SK-N-SH (cell line): ENCODE measurements at regions of chr1 and their contacts with region 1.

Region 1: DNA sequence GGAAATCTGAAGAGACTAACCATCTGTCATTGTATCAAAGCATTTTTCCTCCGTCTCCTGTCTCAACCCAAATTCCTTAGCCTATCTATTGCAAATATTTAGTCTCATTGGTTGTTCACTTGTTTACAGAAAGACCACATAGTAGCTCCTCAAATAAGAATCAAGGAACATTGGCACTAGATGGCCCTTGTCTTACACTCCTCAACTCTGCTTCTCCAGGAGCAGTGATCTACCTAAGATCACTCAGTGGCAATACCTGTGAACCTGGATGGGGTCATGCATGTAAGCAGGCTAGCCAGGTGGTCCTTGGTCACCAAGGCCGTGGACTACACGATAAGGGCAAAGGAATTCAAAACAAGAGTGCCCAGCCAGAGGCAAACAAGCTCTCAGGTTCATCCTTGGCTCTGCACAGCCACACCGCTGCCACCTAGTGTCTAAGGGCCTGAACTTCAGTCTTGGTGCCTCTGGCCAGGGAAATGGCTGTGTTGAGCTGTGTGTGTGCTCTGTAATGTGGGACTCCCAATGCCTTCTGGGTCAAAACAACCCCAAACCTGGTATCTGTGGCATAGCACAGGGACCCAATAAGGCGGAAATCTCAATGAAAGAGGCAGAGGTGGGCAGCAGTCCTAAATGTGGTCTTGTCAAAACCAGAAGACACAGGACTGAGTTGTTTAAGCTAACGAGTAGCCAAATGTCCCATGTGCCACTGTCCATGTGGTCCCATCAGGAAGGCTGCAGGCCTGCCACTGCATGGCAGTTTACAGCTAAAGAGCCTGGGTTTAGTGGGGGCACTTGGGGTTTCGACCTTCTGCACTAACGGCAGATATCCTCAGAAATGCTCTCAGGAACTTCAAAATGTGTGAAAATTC is 54.5 kb downstream of the GPR161 start:
- DNase-seq: peak; percentile 75
- H3K4me3 ChIP-seq: no peak overlapping the region; a peak in 1 of 4 replicates
- H3K27ac ChIP-seq: peak overlapping the region in 1 of 2 experiments; percentile 24; a peak in 3 of 4 replicates
- H3K4me1 ChIP-seq: peaks cover 7 to 9% of the 10 kb centered on the region in 2 experiments; a peak in 3 of 4 replicates
- H3K27me3 ChIP-seq: no peaks in the 10 kb centered on the region
- CTCF ChIP-seq: peak; percentile 83
- EP300 ChIP-seq: no peak
- RAD21 ChIP-seq: peak; percentile 86

Region 2: DNA sequence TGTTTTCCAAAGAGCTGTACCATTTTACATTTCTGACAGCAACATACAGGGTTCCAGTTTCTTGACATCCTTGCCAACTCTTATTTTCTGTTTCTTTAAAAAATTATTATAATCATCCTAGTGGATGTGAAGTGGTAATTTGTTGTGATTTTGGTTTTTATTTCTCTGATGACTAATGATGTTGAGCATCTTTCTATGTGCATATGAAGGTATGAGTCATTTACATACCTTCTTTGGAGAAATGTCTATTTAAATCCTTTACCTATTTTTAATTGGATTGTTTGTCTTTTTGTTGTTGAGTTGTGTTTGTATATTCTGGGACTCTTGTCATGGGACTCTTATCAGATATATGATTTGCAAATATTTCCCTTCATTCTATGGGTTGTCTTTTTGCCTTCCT is 124.5 kb before region 1 on chr1:
- CTCF ChIA-PET with region 1: no interaction called
- POLR2A ChIA-PET with region 1: no interaction called
- DNase-seq: no peak
- H3K4me3 ChIP-seq: no peak overlapping the region
- H3K27ac ChIP-seq: no peak overlapping the region
- H3K4me1 ChIP-seq: no peaks in the 10 kb centered on the region
- H3K27me3 ChIP-seq: no peaks in the 10 kb centered on the region
- CTCF ChIP-seq: no peak
- EP300 ChIP-seq: no peak
- RAD21 ChIP-seq: no peak

Region 3: DNA sequence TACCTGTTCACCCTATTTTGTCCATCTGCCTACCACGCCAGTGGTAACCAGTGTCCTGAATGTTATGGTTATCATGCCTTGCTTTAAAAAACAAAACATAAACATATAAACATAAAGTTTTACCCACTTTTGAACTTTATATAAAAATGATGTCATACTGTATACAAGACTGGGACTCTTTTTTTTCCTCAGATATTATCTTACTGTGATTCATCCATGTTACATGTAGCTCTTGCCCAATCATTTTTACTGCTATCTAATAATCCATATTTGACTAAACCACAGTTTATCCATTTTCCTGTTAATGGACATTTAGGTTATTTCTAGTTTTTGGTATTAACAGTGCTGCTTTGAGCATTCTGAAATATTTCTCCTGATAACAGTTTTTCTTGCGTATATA is 24.3 kb before region 1 on chr1:
- CTCF ChIA-PET with region 1: interaction called, 13 read pairs
- POLR2A ChIA-PET with region 1: no interaction called
- DNase-seq: no peak
- H3K4me3 ChIP-seq: no peak overlapping the region
- H3K27ac ChIP-seq: no peak overlapping the region
- H3K4me1 ChIP-seq: no peaks in the 10 kb centered on the region
- H3K27me3 ChIP-seq: no peaks in the 10 kb centered on the region
- CTCF ChIP-seq: no peak
- EP300 ChIP-seq: no peak
- RAD21 ChIP-seq: no peak

Region 4: DNA sequence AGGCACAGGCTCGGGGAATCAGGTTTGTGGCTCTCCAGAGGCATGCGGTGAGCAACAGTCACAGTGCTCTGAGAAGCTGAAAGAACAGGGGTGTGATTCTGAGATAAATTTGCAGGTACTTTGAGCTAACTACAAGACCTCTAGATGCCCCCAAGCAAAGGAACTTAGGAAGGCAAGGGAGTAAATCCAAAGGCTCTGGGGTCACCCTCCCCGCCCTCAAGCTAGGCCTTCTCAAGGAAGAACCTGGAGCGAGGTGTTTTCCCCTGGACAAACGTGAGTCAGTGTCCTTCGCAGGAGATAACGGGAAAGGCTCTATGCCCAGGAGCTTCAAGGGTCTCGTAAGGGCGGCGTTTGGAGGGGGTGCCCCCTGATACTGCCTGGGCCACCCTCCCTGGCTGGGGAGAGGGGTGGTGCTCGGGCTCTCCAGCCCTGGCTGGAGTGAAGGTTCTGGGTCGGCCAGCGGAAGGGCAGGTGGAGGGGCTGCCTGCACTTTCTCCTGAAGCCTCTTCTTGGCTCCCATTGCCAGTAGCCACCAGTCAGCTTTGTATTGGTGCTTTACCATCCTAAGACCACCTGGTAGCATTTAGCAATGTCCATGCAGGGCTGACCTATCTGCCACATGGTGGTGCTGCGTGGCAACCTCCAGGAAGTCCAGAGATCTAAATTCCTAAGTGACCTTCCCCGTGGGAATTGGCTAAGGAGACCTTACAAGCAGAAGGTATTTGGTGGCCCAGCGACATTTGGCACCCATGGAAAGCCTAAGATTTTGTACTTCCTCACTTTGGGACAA is 10.5 kb after region 1 on chr1:
- CTCF ChIA-PET with region 1: interaction called, 48 read pairs
- POLR2A ChIA-PET with region 1: no interaction called
- DNase-seq: peak; percentile 44
- H3K4me3 ChIP-seq: no peak overlapping the region
- H3K27ac ChIP-seq: no peak overlapping the region
- H3K4me1 ChIP-seq: no peaks in the 10 kb centered on the region; a peak in 1 of 4 replicates
- H3K27me3 ChIP-seq: no peaks in the 10 kb centered on the region
- CTCF ChIP-seq: peak; percentile 38
- EP300 ChIP-seq: no peak
- RAD21 ChIP-seq: peak; percentile 56

Region 5: DNA sequence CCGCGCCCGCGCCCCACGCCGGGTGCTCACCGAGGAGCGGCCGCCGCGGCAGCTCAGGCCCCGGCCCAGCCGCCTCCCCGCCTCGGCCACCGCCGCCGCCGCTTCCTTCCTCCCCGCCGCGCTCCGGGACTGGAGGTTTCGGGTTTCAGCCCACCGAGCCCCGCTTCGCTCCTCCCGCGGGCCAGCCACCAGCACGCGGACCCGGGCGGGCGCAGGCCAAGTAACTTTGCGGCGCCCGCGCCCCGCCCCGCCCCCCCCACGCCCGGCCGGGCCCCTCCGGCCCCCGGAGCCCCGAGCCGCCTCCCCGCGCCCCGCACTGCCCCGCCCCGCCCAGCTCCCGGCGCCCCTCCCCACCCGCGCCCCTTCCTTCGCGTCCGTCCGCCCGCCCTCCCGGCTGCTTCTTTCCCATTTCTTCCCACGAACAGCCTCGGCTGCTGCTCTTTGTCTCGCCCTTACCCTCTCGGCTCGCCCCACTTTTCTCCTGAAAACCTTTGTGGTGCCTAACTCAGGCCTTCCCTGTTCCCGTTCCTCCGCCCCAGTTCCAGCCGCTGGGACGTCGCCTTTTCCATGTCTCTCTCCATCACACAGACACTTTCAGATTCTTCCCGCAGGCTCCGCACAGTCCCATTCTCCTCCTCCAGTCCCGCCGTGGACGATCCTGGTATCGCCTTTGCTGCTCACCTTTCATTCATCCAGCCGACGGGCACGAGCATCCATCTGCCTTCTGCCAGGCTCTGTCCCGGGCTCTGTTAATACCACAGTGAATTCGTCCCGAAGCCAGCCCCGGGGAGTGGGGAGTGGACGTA is 54.7 kb after region 1 on chr1 and contains the start of gene GPR161:
- CTCF ChIA-PET with region 1: interaction called, 12 read pairs
- POLR2A ChIA-PET with region 1: no interaction called
- DNase-seq: peak; percentile 85
- H3K4me3 ChIP-seq: peak within 1 kb of the TSS; percentile 82 to 91
- H3K27ac ChIP-seq: peak within 1 kb of the TSS; percentile 88 to 89
- H3K4me1 ChIP-seq: peaks cover 13% of the 10 kb centered on the region in 2 experiments; a peak in 3 of 4 replicates
- H3K27me3 ChIP-seq: no peaks in the 10 kb centered on the region
- CTCF ChIP-seq: no peak
- EP300 ChIP-seq: no peak
- RAD21 ChIP-seq: no peak
- polyA plus RNA-seq, gene GPR161: 19.2 and 20.1 TPM in 2 replicates

Region 6: GRCh38 chr1:168572633-168573032 is 490.4 kb after region 1 on chr1:
- CTCF ChIA-PET with region 1: no interaction called
- POLR2A ChIA-PET with region 1: no interaction called
- DNase-seq: no peak
- H3K4me3 ChIP-seq: no peak overlapping the region
- H3K27ac ChIP-seq: no peak overlapping the region
- H3K4me1 ChIP-seq: no peaks in the 10 kb centered on the region; a peak in 1 of 4 replicates
- H3K27me3 ChIP-seq: no peaks in the 10 kb centered on the region
- CTCF ChIP-seq: no peak
- EP300 ChIP-seq: no peak
- RAD21 ChIP-seq: no peak